CD8-positive, alpha-beta T cell (primary cell): ENCODE measurements at regions of chr19 and their contacts with region 1.

Region 1: GRCh38 chr19:58400916-58401839 is 5.7 kb downstream of the RNF225 start:
- DNase-seq: peak; percentile 97 to 100 (median 99)
- ATAC-seq: peak; percentile 97
- H3K4me3 ChIP-seq: peak overlapping the region; percentile 72 to 77
- H3K4me3 Mint-ChIP-seq: peak overlapping the region; percentile 93
- H3K27ac ChIP-seq: peak overlapping the region; percentile 93 to 94
- H3K27ac Mint-ChIP-seq: peak overlapping the region; percentile 96
- H3K4me1 ChIP-seq: peaks cover 12% of the 10 kb centered on the region
- H3K4me1 Mint-ChIP-seq: peaks cover 15% of the 10 kb centered on the region
- H3K27me3 ChIP-seq: peaks cover 0 to 4% of the 10 kb centered on the region in 2 experiments
- H3K27me3 Mint-ChIP-seq: peaks cover 10% of the 10 kb centered on the region
- CTCF ChIP-seq: no peak

Region 2: DNA sequence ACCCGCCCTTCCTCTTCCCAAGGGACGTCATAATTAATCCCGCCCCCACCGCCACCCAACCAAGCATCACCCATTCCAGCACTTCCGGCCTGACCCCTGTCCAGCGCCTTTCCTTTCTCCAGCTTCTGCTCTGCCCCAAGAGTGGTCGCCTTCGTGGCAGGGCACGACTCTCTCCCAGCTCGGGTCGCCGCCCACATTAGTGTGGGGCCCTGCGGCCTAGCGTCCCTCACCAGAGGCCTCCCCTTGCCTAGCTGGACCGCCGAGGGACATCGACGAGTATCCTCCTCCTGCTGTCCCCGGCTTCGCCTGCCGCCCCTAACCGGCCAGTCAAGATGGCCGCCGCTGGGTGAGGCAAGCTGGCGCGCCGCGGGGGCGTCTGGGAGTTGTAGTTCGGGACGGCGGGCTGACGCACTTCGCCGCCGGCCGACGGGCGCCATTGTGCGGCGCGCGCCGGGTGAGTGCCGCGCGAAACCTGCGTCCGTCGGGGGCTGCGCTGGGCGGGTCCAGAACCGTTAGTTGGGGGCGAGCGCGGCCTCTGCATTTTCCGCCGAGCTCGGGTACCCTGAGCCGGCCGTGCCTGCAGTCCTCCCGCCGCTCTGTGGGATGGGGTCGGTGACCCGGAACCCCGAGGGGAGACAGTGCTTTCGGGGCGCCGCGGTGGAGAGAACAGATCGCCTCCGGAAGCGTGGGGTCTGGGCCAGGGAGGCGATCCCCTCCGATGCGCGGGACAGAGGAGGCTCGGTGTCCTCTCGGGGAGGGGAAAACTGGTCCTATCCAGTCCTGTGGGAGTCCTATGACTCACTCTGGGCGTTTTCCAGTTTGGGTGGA is 218.0 kb before region 1 on chr19 and contains the start of gene ZNF274:
- CTCF ChIA-PET with region 1: no interaction called
- POLR2A ChIA-PET with region 1: no interaction called
- intact Hi-C with region 1: loop called (anchors 1 to 5 kb)
- DNase-seq: peak; percentile 88 to 96 (median 94)
- ATAC-seq: peak; percentile 86
- H3K4me3 ChIP-seq: peak within 1 kb of the TSS; percentile 90 to 94
- H3K4me3 Mint-ChIP-seq: peak within 1 kb of the TSS; percentile 91
- H3K27ac ChIP-seq: peak within 1 kb of the TSS; percentile 99 to 100
- H3K27ac Mint-ChIP-seq: peak within 1 kb of the TSS; percentile 100
- H3K4me1 ChIP-seq: peaks cover 9% of the 10 kb centered on the region
- H3K4me1 Mint-ChIP-seq: peaks cover 22% of the 10 kb centered on the region
- H3K27me3 ChIP-seq: no peaks in the 10 kb centered on the region
- H3K27me3 Mint-ChIP-seq: no peaks in the 10 kb centered on the region
- CTCF ChIP-seq: no peak
- total RNA-seq, gene ZNF274: 52.7 to 58.9 TPM

Region 3: GRCh38 chr19:58346961-58347931 is 53.9 kb before region 1 on chr19:
- CTCF ChIA-PET with region 1: no interaction called
- POLR2A ChIA-PET with region 1: no interaction called
- intact Hi-C with region 1: loop called in 1 of 2 experiments (anchors 5 kb)
- DNase-seq: peak; percentile 41 to 86 (median 71)
- ATAC-seq: peak; percentile 90
- H3K4me3 ChIP-seq: peak overlapping the region; percentile 72 to 95
- H3K4me3 Mint-ChIP-seq: peak overlapping the region; percentile 91
- H3K27ac ChIP-seq: peak overlapping the region; percentile 63 to 85
- H3K27ac Mint-ChIP-seq: peak overlapping the region; percentile 93
- H3K4me1 ChIP-seq: peaks cover 17% of the 10 kb centered on the region
- H3K4me1 Mint-ChIP-seq: peaks cover 35% of the 10 kb centered on the region
- H3K27me3 ChIP-seq: no peaks in the 10 kb centered on the region
- H3K27me3 Mint-ChIP-seq: no peaks in the 10 kb centered on the region
- CTCF ChIP-seq: no peak

Region 4: GRCh38 chr19:58451358-58452101 is 50.4 kb after region 1 on chr19 and contains the start of gene ZNF324B:
- CTCF ChIA-PET with region 1: no interaction called
- POLR2A ChIA-PET with region 1: no interaction called
- intact Hi-C with region 1: loop called in 1 of 2 experiments (anchors 1 kb)
- DNase-seq: peak; percentile 92 to 98 (median 96)
- ATAC-seq: peak; percentile 96
- H3K4me3 ChIP-seq: peak within 1 kb of the TSS; percentile 55 to 83
- H3K4me3 Mint-ChIP-seq: peak within 1 kb of the TSS; percentile 82
- H3K27ac ChIP-seq: peak within 1 kb of the TSS; percentile 44 to 70
- H3K27ac Mint-ChIP-seq: peak within 1 kb of the TSS; percentile 27
- H3K4me1 ChIP-seq: peaks cover 10% of the 10 kb centered on the region
- H3K4me1 Mint-ChIP-seq: peaks cover 16% of the 10 kb centered on the region
- H3K27me3 ChIP-seq: peaks cover 0 to 9% of the 10 kb centered on the region in 2 experiments
- H3K27me3 Mint-ChIP-seq: peaks cover 9% of the 10 kb centered on the region
- CTCF ChIP-seq: no peak
- total RNA-seq, gene ZNF324B: 6.2 to 6.5 TPM

Region 5: GRCh38 chr19:58475714-58476497 is 74.7 kb after region 1 on chr19 and contains the start of gene ZNF446:
- CTCF ChIA-PET with region 1: no interaction called
- POLR2A ChIA-PET with region 1: no interaction called
- intact Hi-C with region 1: loop called (anchors 1 kb)
- DNase-seq: peak; percentile 92 to 99 (median 97)
- ATAC-seq: peak; percentile 82
- H3K4me3 ChIP-seq: peak within 1 kb of the TSS; percentile 56 to 72
- H3K4me3 Mint-ChIP-seq: peak within 1 kb of the TSS; percentile 92
- H3K27ac ChIP-seq: peak within 1 kb of the TSS; percentile 75 to 95
- H3K27ac Mint-ChIP-seq: peak within 1 kb of the TSS; percentile 97
- H3K4me1 ChIP-seq: peaks cover 17% of the 10 kb centered on the region
- H3K4me1 Mint-ChIP-seq: peaks cover 16% of the 10 kb centered on the region
- H3K27me3 ChIP-seq: no peaks in the 10 kb centered on the region
- H3K27me3 Mint-ChIP-seq: no peaks in the 10 kb centered on the region
- CTCF ChIP-seq: no peak
- total RNA-seq, gene ZNF446: 14.6 to 16.5 TPM

Region 6: DNA sequence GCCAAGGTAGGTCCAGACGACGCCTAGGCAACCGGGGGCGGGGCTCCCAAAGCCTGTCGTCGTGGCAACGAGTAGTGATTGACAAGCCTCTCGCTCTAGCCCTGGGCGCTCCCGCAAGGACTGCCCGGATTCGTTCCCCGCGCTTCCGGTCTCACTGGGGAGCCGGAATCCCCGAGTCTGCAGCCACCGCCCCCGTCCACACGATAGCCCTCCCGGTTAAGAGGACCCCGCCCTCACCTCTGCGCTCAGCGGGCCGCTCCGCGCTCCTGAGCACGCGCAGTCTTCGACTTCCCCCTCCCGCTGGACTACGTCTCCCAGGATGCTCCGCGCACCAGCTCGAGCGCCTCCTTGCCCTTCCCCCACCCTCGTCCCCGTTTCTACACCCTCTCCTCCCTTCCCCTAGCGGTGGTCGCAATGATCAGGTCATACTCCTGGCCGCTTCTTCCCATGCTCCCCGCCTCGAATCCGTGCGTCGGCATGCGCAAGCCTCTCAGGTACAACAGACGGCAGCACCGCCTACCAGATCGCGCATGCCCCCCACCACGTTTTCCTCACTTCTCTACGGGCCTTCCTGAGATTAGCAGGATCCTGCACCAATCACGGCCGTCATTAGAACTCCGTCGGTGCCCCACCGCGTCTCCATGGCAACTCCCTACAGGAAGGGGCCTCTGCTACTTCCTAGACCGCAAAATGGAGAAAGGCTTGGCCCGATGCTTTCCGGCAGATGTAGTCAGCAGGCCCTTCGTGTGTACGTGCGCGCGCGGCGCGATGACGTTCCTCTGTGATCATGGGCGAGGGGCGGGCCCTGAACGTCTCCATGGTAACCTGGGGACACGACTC is 171.9 kb after region 1 on chr19 and contains the start of gene MZF1:
- CTCF ChIA-PET with region 1: no interaction called
- POLR2A ChIA-PET with region 1: no interaction called
- intact Hi-C with region 1: loop called (anchors 1 kb)
- DNase-seq: peak; percentile 99 to 100 (median 99)
- ATAC-seq: peak; percentile 70
- H3K4me3 ChIP-seq: peak within 1 kb of the TSS; percentile 83 to 84
- H3K4me3 Mint-ChIP-seq: peak within 1 kb of the TSS; percentile 98
- H3K27ac ChIP-seq: peak within 1 kb of the TSS; percentile 98 to 100
- H3K27ac Mint-ChIP-seq: peak within 1 kb of the TSS; percentile 99
- H3K4me1 ChIP-seq: peaks cover 22% of the 10 kb centered on the region
- H3K4me1 Mint-ChIP-seq: peaks cover 30% of the 10 kb centered on the region
- H3K27me3 ChIP-seq: no peaks in the 10 kb centered on the region
- H3K27me3 Mint-ChIP-seq: no peaks in the 10 kb centered on the region
- CTCF ChIP-seq: no peak
- total RNA-seq, gene MZF1: 14.1 to 15.0 TPM